ENCODE measurements at regions of chr2 and their contacts with region 1.

Region 1: DNA sequence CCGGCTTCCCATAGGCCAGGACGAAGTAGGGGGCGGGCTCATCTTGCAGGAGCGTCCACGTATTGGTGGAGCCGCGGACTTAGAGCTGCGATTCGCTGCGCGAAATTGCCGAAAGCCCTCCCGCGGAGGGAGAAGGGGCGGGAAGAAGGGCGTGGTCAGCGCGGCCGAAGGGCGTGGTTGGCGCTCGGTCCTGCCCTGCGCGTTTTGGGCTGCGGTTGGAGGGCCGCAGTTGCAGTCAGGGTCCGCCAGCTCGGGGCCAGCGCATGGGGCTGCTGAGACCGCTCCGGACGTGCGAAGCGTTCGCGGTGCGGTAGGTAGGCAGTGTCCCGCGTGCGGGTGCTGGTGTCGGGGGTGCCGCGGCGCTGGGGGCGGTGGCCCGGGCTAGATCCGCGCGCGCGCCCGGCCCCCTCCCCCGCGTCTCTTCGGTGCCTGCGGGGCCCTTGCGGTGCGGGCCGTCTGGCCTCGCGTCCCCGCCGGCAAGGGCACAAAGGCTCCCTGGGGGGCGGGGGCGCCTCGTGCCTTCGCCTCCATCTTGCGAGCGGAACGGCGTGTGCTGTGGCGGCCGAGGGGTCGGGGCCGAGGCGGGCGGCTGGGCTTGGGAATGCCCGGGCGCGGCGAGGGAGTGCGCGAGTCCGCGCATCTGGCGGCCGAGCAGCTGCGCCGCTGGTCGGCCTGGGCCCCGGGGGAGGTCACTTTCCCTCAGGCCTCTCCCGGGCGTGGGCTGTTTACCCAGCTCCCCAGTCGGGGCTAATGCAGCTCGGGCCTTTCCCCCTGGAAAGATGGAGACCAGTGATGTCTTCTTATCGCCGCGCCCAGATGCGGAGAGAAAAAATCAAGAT is at the start of gene CEP68:
- DNase-seq: peak; percentile 98
- ATAC-seq: peak; percentile 94
- H3K4me3 ChIP-seq: peak within 1 kb of the TSS; percentile 78 to 88 (median 83)
- H3K27ac ChIP-seq: peak within 1 kb of the TSS; percentile 71
- H3K4me1 ChIP-seq: peaks cover 71% of the 10 kb centered on the region
- H3K27me3 ChIP-seq: no peaks in the 10 kb centered on the region; a peak in 1 of 5 replicates
- CTCF ChIP-seq: 0 out of 2 replicates have a peak, but pooled peaks have one; percentile 12
- EP300 ChIP-seq: no peak
- POLR2A ChIP-seq: peak; percentile 96 to 99
- RAD21 ChIP-seq: peak; percentile 67; the same call in 1 of the 2 replicates
- total RNA-seq, gene CEP68: 5.7 TPM in 2 replicates

Region 2: GRCh38 chr2:64750817-64751285 is 305.6 kb before region 1 on chr2:
- CTCF ChIA-PET with region 1: no interaction called
- POLR2A ChIA-PET with region 1: interaction called, 10 read pairs
- in situ Hi-C with region 1: no loop called
- intact Hi-C with region 1: no loop called
- DNase-seq: peak; percentile 99
- ATAC-seq: peak; percentile 92
- H3K4me3 ChIP-seq: peak overlapping the region; percentile 80 to 93 (median 89)
- H3K27ac ChIP-seq: peak overlapping the region; percentile 80
- H3K4me1 ChIP-seq: peaks cover 42% of the 10 kb centered on the region
- H3K27me3 ChIP-seq: no peaks in the 10 kb centered on the region; a peak in 1 of 5 replicates
- CTCF ChIP-seq: no peak; the same call in 1 of the 2 replicates
- EP300 ChIP-seq: peak in 1 of 2 experiments; percentile 9; a peak in 2 of 4 replicates
- POLR2A ChIP-seq: peak; percentile 73 to 92
- RAD21 ChIP-seq: peak; percentile 59; the same call in 1 of the 2 replicates

Region 3: DNA sequence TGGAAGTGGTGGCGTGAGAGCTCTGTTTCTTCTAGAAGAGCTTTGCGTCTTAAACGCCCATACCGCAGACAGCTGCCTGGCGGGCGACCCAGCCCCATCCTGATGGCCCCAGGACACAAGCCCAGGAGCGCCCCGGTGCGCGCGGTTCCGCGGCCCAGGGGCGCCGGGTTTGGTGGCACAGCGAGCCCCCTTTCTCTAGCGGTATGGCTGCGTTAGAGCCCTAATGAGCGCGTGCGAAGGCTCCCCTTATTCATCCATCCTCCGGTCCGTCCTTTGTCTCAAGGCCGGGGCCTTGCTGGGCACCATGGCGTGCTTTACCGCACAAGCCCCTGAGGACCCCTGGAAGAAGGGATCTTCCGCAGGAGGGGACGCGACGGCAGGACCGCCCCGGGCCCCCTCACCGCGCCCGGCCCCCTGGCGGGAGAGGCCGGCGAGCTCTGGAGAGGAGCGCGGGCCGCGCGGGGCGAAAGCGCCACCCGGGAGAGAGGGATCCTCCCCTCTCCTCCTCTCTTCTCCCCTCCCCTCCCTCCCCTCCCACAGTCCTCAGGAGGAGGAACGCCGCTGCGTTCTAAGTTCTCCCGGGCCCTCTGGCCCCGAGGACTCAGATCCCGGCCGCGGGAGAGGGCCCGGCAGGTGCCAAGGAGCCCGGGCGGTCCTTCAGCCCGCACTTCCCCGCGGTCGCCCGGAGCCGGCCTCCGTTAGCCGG is 67.9 kb before region 1 on chr2:
- CTCF ChIA-PET with region 1: no interaction called
- POLR2A ChIA-PET with region 1: interaction called, 19 read pairs
- in situ Hi-C with region 1: no loop called
- intact Hi-C with region 1: no loop called
- DNase-seq: peak; percentile 75
- ATAC-seq: peak; percentile 77
- H3K4me3 ChIP-seq: peak overlapping the region; percentile 77 to 92 (median 83)
- H3K27ac ChIP-seq: peak overlapping the region; percentile 84
- H3K4me1 ChIP-seq: peaks cover 71% of the 10 kb centered on the region
- H3K27me3 ChIP-seq: no peaks in the 10 kb centered on the region; a peak in 1 of 5 replicates
- CTCF ChIP-seq: peak; percentile 64
- EP300 ChIP-seq: no peak; a peak in 1 of 4 replicates
- POLR2A ChIP-seq: peak; percentile 63 to 73
- RAD21 ChIP-seq: peak; percentile 77

Region 4: DNA sequence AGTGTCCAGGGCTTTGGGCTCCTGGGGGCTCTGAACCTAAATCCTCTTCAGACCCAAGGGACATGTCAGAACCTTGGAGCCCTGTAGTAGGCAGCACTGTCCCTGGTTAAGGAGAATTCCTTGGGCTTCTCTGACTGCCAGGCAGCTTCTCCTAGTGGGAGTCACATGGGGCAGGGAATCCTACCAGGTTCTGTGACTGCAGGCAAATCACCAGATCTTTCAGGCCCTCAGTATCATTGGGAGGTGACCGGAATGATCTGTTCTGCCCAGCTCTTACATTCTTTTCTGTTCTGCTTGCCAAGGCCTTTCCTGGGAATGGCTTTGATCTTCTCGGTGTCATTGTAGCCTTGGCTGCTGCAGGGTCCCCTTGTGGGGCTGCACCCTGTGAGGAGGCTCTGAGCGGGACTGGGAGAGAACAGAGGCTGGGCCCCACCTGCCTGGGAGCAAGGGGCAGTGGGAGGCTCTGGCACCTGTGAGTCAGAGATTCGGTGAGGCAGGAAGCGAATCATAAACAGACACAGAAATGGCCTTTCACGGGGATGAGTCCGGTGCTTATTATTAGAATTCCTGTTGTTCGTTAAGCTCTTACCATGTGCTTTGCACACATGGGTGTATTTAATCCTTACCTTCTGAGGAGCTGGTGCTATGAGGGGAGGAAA is 13.9 kb after region 1 on chr2:
- CTCF ChIA-PET with region 1: no interaction called
- POLR2A ChIA-PET with region 1: interaction called, 37 read pairs
- in situ Hi-C with region 1: no loop called
- intact Hi-C with region 1: no loop called
- DNase-seq: peak; percentile 84
- ATAC-seq: peak; percentile 59
- H3K4me3 ChIP-seq: no peak overlapping the region
- H3K27ac ChIP-seq: peak overlapping the region; percentile 32
- H3K4me1 ChIP-seq: peaks cover 38% of the 10 kb centered on the region
- H3K27me3 ChIP-seq: no peaks in the 10 kb centered on the region
- CTCF ChIP-seq: peak; percentile 23; the same call in 1 of the 2 replicates
- EP300 ChIP-seq: 0 out of 4 replicates have a peak, but pooled peaks of 1 of the 2 experiments have one; percentile 10
- POLR2A ChIP-seq: 0 out of 4 replicates have a peak, but pooled peaks of 1 of the 2 experiments have one; percentile 8
- RAD21 ChIP-seq: no peak

Region 5: GRCh38 chr2:65186872-65187851 is 130.7 kb after region 1 on chr2:
- CTCF ChIA-PET with region 1: no interaction called
- POLR2A ChIA-PET with region 1: interaction called, 10 read pairs
- in situ Hi-C with region 1: no loop called
- intact Hi-C with region 1: no loop called
- DNase-seq: peak; percentile 88
- ATAC-seq: peak; percentile 90
- H3K4me3 ChIP-seq: peak overlapping the region; percentile 62 to 75 (median 72)
- H3K27ac ChIP-seq: peak overlapping the region; percentile 64
- H3K4me1 ChIP-seq: peaks cover 33% of the 10 kb centered on the region
- H3K27me3 ChIP-seq: peaks cover 0 to 9% of the 10 kb centered on the region in 2 experiments; a peak in 4 of 5 replicates
- CTCF ChIP-seq: peak; percentile 97
- EP300 ChIP-seq: peak; percentile 20 to 23; a peak in 1 of 4 replicates
- POLR2A ChIP-seq: no peak
- RAD21 ChIP-seq: peak; percentile 92

Region 6: GRCh38 chr2:65576861-65577601 is 520.6 kb after region 1 on chr2:
- CTCF ChIA-PET with region 1: no interaction called
- POLR2A ChIA-PET with region 1: no interaction called
- in situ Hi-C with region 1: loop called (anchors 25 kb)
- intact Hi-C with region 1: loop called (anchors 10 kb)
- DNase-seq: peak; percentile 91
- ATAC-seq: peak; percentile 91
- H3K4me3 ChIP-seq: peak overlapping the region in 2 of 3 experiments; percentile 13 to 23; a peak in 1 of 6 replicates
- H3K27ac ChIP-seq: no peak overlapping the region
- H3K4me1 ChIP-seq: peaks cover 19% of the 10 kb centered on the region
- H3K27me3 ChIP-seq: no peaks in the 10 kb centered on the region
- CTCF ChIP-seq: no peak
- EP300 ChIP-seq: peak in 1 of 2 experiments; percentile 74; a peak in 1 of 4 replicates
- POLR2A ChIP-seq: no peak
- RAD21 ChIP-seq: no peak